ENCODE measurements at regions of chr5 and their contacts with region 1.

Region 1: GRCh38 chr5:79845448-79846197 is 145.4 kb downstream of the MTX3 start:
- DNase-seq: no peak
- H3K4me3 ChIP-seq: no peak overlapping the region
- H3K27ac ChIP-seq: peak overlapping the region in 1 of 2 donors; percentile 34
- H3K4me1 ChIP-seq: no peaks in the 10 kb centered on the region
- H3K27me3 ChIP-seq: no peaks in the 10 kb centered on the region
- CTCF ChIP-seq: no peak
- POLR2A ChIP-seq: no peak

Region 2: DNA sequence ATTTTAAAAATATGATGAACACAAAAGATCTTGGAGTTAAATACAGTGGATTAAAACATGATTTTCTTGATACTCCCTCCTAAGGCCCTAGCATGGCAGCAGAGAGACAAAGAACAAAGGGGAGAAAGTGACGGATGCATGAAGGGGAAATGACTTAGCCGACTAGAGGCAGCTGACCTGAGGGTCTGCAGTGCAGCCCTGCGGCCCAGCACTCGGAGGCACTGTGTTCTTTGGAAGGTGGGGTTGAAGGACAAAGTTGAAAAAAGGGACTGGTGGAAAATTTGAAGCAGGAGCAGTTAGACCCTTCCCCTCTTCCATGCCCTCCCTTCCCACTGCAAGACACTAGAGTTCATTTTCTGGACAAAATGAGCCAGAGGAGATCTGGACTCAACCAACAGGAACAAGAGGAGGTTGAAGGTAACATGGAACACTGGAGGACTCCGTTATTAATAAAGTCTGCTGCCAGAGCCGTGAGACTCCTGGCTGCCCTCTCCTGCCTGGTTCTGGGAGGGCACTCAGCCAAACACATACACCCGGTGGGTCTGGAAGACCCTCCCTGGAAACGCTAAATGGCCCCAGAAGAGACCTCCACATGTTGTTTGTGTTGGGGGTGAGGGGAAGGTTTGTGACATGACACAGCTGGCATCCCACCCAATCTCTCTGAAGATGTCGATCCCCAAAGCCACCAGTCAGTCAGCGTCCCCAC is 511.6 kb before region 1 on chr5:
- intact Hi-C with region 1: no loop called
- DNase-seq: no peak
- H3K4me3 ChIP-seq: no peak overlapping the region
- H3K27ac ChIP-seq: no peak overlapping the region
- H3K4me1 ChIP-seq: no peaks in the 10 kb centered on the region
- H3K27me3 ChIP-seq: no peaks in the 10 kb centered on the region
- CTCF ChIP-seq: no peak
- POLR2A ChIP-seq: no peak

Region 3: DNA sequence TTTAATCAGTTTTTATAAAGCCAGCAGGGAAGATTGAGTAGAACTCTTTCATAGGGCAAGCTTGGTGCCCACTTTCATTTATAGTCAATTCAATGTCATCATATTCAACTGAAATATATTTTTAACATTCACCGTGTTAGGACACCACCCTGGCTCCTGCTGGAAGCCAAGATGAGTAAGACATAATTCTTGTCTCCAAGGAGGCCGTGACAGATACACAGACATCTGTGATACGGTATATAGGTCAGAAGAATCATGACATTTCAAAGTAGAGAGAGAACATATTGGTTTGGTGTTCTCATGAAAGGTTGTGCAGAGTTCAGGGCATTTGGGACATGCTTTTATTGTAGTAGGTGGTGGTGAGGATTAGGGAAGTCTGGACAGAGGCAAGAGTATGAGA is 35.9 kb before region 1 on chr5:
- intact Hi-C with region 1: loop called (anchors 2 kb)
- DNase-seq: no peak
- H3K4me3 ChIP-seq: no peak overlapping the region
- H3K27ac ChIP-seq: no peak overlapping the region
- H3K4me1 ChIP-seq: no peaks in the 10 kb centered on the region
- H3K27me3 ChIP-seq: no peaks in the 10 kb centered on the region
- CTCF ChIP-seq: no peak
- POLR2A ChIP-seq: no peak